ENCODE measurements at regions of chr5 and their contacts with region 1.

Region 1: DNA sequence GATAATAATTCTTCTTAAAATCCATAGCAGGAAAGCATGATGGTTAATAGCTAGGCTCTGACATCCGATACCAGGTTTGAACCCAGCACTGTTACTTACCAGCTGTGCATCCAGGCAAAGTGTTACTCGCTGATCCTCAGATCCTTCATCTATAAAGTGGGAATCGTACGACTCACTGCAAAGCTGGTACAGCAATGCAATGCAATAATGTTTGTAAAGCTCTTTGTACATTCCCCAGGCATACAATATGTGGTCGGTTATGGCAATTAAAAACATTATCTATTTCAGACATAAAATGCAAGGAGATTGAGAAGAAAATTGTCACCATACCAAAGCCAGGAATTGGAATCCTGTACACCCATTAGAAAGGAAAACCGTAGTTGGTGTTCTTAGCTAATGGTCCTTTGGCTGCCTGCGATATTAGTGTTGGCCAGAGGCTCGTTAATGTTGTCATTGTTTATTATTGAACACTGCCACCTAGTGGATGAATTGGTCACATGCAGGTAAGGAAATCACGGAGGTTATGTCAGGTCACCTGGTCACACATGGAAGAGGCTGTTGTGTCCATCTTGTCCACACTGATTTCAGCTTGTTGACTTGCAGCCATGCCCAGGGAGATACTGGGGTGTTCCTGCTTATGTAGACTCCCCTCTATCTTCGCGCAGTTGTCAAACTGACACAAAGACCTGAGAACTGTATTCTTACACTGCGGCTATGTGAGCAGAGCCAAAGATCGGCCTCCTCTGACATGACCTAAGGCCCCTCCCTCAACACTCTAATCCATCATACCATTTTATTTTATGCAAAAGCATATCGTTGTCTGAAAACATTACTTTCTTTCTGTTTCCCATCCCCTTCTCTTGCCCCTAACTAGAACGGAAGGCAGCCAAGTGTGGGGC is 87.5 kb upstream of the PPP2R2B start:
- DNase-seq: peak; percentile 70
- ATAC-seq: peak; percentile 75
- H3K4me3 Mint-ChIP-seq: no peak overlapping the region
- H3K27ac Mint-ChIP-seq: no peak overlapping the region
- H3K4me1 Mint-ChIP-seq: no peaks in the 10 kb centered on the region
- H3K27me3 Mint-ChIP-seq: no peaks in the 10 kb centered on the region

Region 2: DNA sequence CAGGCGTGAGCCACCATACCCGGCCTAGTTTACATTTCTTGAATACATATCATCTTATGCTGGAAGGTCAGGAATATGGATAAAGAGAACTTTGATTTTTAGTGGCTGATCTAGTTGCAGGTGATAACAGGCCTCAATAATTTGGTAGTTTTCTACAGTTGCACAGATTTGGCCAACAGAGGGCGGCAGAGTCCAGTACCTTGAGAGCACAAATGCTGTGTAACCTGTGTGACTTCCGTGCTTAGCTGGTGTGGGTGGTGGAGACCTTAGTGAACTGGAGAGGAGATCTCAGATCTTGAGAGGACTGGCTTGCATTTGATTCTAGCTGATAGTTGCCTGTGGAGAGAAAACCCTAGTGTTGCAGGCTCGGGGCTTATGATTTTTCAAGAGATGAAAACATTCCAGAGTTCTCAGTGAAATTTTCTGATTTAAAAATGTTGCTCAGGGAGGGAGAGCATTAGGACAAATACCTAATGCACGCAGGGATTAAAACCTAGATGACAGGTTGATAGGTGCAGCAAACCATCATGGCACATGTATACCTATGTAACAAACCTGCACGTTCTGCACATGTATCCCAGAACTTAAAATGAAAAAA is 432.7 kb before region 1 on chr5:
- CTCF ChIA-PET with region 1: interaction called, 32 read pairs
- POLR2A ChIA-PET with region 1: no interaction called
- DNase-seq: peak; percentile 86
- ATAC-seq: peak; percentile 94
- H3K4me3 Mint-ChIP-seq: no peak overlapping the region
- H3K27ac Mint-ChIP-seq: no peak overlapping the region
- H3K4me1 Mint-ChIP-seq: peaks cover 16% of the 10 kb centered on the region
- H3K27me3 Mint-ChIP-seq: peaks cover 4% of the 10 kb centered on the region

Region 3: DNA sequence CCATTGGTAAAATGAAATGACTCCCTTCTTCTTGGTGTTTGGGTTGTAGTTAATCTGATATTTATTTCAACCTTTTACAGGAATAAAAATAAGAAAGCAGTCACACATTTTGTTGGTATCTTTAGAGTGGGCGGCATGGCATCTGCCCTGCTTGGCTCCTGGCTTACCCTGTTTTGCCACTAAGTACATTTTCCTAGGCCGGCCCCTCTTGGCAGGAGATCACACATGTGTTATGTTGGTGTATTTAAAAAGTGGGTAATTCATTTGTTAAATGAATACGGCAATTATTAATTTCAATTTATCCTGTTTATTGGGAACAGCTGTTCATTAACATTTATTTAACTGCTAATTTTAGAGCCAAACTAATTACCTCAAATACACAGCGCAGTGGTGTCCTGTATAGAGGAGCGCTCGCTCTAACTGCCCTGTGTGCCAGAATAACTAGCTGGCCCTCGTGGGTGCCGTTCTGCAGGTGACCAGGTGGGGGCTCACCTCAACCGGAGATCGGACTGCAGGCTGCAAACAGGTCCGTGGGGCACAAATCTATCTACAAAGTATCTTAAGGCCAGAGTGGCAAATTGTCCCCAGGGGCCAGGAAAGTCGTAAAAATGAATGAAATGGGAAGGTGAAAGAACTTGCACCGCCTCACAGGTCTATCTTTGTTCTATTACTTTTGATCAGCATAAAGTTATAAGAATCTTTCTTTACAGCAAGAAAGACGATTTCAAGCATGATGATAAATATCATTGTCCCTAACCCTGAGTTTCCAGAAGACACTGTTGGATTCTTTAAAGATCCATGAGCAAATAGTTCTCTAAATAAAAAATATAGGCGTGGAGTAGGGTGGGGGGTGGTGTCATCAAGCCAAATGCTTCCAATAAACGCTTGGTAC is 423.8 kb before region 1 on chr5:
- CTCF ChIA-PET with region 1: interaction called, 43 read pairs
- POLR2A ChIA-PET with region 1: no interaction called
- DNase-seq: peak; percentile 78
- ATAC-seq: peak; percentile 92
- H3K4me3 Mint-ChIP-seq: no peak overlapping the region
- H3K27ac Mint-ChIP-seq: no peak overlapping the region
- H3K4me1 Mint-ChIP-seq: no peaks in the 10 kb centered on the region
- H3K27me3 Mint-ChIP-seq: no peaks in the 10 kb centered on the region

Region 4: DNA sequence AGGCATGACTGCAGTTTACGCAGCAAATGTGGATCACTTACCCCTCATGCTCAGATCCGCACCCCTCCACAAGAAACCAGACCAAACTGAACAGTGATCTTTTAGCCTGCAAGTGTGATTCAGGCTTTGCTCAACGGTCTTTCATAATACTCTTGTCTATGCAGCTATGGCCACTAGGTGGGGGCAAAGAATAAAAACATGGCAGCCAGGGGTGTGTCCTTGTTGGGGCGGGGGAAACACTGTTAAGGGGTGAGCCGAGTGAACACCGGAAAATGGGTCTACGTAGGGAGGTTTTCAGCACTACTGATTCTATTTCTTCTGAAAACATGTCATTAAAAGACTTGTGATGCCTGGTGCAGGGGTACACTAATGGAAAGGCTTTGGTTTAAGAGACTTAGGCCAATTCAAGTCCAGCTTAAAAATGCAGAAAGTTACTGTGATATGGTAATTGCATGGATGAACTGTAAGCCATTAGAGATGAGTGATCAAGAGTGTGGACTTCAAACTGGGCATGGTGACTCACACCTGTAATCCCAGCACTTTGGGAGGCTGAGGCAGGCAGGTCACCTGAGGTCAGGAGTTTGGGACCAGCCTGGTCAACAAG is 400.1 kb before region 1 on chr5:
- CTCF ChIA-PET with region 1: interaction called, 21 read pairs
- POLR2A ChIA-PET with region 1: no interaction called
- DNase-seq: peak; percentile 71
- ATAC-seq: peak; percentile 98
- H3K4me3 Mint-ChIP-seq: no peak overlapping the region
- H3K27ac Mint-ChIP-seq: no peak overlapping the region
- H3K4me1 Mint-ChIP-seq: peaks cover 3% of the 10 kb centered on the region
- H3K27me3 Mint-ChIP-seq: no peaks in the 10 kb centered on the region

Region 5: GRCh38 chr5:146662229-146662628 is 303.8 kb before region 1 on chr5:
- CTCF ChIA-PET with region 1: interaction called, 50 read pairs
- POLR2A ChIA-PET with region 1: no interaction called
- DNase-seq: peak; percentile 35
- ATAC-seq: no peak
- H3K4me3 Mint-ChIP-seq: no peak overlapping the region
- H3K27ac Mint-ChIP-seq: no peak overlapping the region
- H3K4me1 Mint-ChIP-seq: no peaks in the 10 kb centered on the region
- H3K27me3 Mint-ChIP-seq: no peaks in the 10 kb centered on the region

Region 6: GRCh38 chr5:146894753-146895521 is 71.1 kb before region 1 on chr5:
- CTCF ChIA-PET with region 1: no interaction called
- POLR2A ChIA-PET with region 1: no interaction called
- DNase-seq: no peak
- ATAC-seq: no peak
- H3K4me3 Mint-ChIP-seq: no peak overlapping the region
- H3K27ac Mint-ChIP-seq: no peak overlapping the region
- H3K4me1 Mint-ChIP-seq: peaks cover 5% of the 10 kb centered on the region
- H3K27me3 Mint-ChIP-seq: no peaks in the 10 kb centered on the region

Region 7: DNA sequence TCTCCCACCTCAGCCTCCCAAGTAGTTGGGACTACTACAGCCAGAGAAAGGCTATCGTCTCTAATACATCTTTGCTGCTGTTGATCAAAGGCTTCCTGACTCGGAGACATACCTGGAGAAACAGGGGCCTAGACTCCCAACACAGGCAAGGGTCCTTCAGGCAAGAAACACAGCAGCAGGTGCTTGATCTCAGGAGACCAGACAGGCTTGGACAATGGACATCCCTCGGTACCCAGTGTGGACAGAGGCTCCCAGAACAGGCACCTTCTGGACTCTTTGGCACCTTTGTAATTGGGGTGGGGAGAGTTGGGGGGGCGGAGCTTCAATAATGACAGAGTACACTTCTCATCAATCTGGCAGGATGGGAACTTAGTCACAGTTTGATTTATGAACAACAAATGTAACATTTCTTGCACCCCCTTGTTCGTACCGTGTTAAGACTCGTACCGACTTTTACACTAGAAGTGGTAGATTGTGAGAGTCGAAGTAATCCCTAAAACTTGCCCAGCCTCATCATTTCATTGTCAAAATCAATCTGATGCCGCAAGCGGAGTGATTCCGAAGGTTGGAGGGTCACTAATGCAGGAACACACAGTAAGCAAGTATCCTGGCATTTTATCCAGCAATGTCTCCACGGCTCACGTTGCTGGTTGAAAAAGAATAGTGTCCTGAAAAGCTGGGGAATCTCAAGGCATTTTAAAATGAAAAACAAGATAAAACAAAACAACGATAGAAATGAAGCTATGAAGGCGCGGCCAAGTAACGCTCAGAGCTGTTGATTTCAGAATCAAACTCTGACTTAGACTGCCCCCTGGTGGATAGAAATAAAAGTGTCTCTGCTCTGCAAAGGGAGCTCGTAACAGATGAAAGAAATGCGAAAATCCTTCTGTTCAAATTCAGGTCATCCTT is 222.4 kb after region 1 on chr5:
- CTCF ChIA-PET with region 1: interaction called, 12 read pairs
- POLR2A ChIA-PET with region 1: no interaction called
- DNase-seq: peak; percentile 65
- ATAC-seq: no peak
- H3K4me3 Mint-ChIP-seq: no peak overlapping the region
- H3K27ac Mint-ChIP-seq: peak overlapping the region; percentile 34
- H3K4me1 Mint-ChIP-seq: peaks cover 4% of the 10 kb centered on the region
- H3K27me3 Mint-ChIP-seq: peaks cover 6% of the 10 kb centered on the region

Measured in activated CD8-positive, alpha-beta T cell treated with anti-CD3 and anti-CD28 coated beads, Interleukin-2, amount 10 ng/mL, durations not matched to agents 7 days and 5 days (primary cell).